H1 (cell line): ENCODE measurements at regions of chr3 and their contacts with region 1.

Region 1: DNA sequence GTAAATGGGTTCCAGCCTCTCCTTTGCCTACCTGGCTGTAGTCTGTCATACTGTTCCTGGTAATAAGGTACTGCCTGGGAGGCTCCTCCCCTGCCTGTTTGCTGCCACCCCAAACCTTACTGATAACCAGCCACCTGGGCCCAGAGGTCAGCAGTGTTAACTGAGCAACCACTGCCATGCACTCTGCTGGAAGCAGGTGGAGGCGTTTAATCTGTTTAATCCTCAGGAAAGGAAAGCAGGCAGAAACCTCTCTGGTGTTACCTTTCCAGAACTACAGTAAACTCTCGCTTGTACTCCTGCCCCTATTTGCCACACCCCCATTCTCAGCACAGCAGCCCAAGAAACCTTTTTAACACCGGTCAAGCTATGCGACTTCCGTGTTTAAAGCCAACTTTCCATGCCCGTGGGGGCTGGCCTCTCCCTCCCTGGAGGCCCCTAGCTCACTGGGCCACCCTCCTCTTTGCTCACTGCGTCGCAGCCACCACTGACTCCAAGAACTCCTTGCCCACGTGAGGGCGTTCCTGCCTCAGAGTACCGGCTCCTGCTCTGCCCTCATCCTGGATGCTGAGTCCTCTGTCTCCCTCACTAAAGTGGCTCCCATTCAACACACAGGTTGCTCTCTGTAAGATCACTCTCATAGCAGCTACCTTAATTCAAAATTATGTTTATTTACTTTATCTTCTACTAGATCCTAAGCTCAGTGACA is 8.3 kb downstream of the BDH1 start:
- DNase-seq: peak in 1 of 2 experiments; percentile 65
- H3K4me3 ChIP-seq: no peak overlapping the region
- H3K27ac ChIP-seq: no peak overlapping the region
- H3K4me1 ChIP-seq: peaks cover 10 to 35% (median 17%) of the 10 kb centered on the region in 4 experiments
- H3K27me3 ChIP-seq: no peaks in the 10 kb centered on the region; a peak in 2 of 7 replicates
- CTCF ChIP-seq: peak; percentile 63 to 78 (median 75)
- EP300 ChIP-seq: no peak
- POLR2A ChIP-seq: no peak
- RAD21 ChIP-seq: peak; percentile 82 to 86

Region 2: GRCh38 chr3:197525706-197526105 is 21.8 kb before region 1 on chr3:
- CTCF ChIA-PET with region 1: interaction called, 11 read pairs
- POLR2A ChIA-PET with region 1: interaction called, 5 read pairs
- DNase-seq: no peak
- H3K4me3 ChIP-seq: no peak overlapping the region
- H3K27ac ChIP-seq: no peak overlapping the region
- H3K4me1 ChIP-seq: peaks cover 0 to 10% (median 9%) of the 10 kb centered on the region in 4 experiments; a peak in 6 of 7 replicates
- H3K27me3 ChIP-seq: no peaks in the 10 kb centered on the region
- CTCF ChIP-seq: peak in 2 of 3 experiments; percentile 48 to 76; a peak in 3 of 4 replicates
- EP300 ChIP-seq: no peak
- POLR2A ChIP-seq: no peak
- RAD21 ChIP-seq: peak; percentile 35 to 42; a peak in 3 of 4 replicates

Region 3: GRCh38 chr3:197858598-197858997 is 311.1 kb after region 1 on chr3:
- CTCF ChIA-PET with region 1: no interaction called
- POLR2A ChIA-PET with region 1: no interaction called
- DNase-seq: no peak
- H3K4me3 ChIP-seq: no peak overlapping the region; a peak in 1 of 8 replicates
- H3K27ac ChIP-seq: no peak overlapping the region
- H3K4me1 ChIP-seq: peaks cover 6 to 24% (median 19%) of the 10 kb centered on the region in 4 experiments; a peak in 5 of 7 replicates
- H3K27me3 ChIP-seq: no peaks in the 10 kb centered on the region
- CTCF ChIP-seq: no peak
- EP300 ChIP-seq: no peak
- POLR2A ChIP-seq: 0 out of 3 replicates have a peak, but pooled peaks of 1 of the 2 experiments have one; percentile 52
- RAD21 ChIP-seq: no peak